ENCODE measurements at regions of chr4 and their contacts with region 1.

Region 1: DNA sequence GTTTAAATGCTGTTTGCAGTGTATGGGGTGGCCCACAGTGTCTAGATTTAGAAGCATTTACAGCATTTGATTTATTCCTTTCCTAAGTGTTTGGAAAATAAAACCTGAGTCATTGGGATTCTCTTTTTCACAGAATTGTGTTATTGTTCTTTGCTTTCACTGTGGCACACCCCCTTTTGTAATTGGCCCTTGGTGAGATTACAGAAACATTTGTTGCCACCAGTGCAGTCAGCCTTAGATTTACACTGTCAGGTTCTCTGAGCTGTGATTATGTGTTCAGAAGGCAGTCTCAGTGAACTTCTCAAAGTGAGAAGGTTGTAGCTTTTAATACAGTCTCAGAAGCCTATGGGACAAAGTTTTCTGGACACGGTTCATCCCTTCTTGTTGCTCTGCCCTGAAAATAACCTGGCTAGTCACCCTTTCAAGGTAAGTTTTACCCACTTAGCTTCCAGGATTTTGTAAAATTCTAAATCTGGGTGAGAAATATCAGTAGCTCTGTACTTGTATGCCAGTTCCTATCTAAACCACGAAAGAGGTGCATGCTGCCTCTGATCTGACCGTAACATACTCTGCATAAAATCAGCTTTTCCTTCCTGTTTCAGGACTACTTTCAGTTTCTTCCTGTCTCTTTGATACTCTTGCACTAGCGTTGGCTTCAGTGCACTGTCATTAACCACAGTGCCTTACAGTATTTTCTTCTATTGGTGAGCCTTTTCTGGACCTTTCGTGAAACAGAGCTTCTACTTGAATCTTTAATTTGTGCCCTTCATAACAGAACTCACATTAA is 12.6 kb downstream of the RUFY3 start:
- DNase-seq: peak in 4 of 5 donors; percentile 10 to 68 (median 62)
- H3K4me3 ChIP-seq: peak overlapping the region; percentile 66
- H3K4me3 Mint-ChIP-seq: peak overlapping the region; percentile 60 to 83 (median 75)
- H3K27ac ChIP-seq: peak overlapping the region; percentile 60
- H3K27ac Mint-ChIP-seq: peak overlapping the region; percentile 77 to 95 (median 88)
- H3K4me1 ChIP-seq: peaks cover 50% of the 10 kb centered on the region
- H3K4me1 Mint-ChIP-seq: peaks cover 42 to 53% (median 48%) of the 10 kb centered on the region in 3 donors
- H3K27me3 ChIP-seq: no peaks in the 10 kb centered on the region
- H3K27me3 Mint-ChIP-seq: no peaks in the 10 kb centered on the region

Region 2: DNA sequence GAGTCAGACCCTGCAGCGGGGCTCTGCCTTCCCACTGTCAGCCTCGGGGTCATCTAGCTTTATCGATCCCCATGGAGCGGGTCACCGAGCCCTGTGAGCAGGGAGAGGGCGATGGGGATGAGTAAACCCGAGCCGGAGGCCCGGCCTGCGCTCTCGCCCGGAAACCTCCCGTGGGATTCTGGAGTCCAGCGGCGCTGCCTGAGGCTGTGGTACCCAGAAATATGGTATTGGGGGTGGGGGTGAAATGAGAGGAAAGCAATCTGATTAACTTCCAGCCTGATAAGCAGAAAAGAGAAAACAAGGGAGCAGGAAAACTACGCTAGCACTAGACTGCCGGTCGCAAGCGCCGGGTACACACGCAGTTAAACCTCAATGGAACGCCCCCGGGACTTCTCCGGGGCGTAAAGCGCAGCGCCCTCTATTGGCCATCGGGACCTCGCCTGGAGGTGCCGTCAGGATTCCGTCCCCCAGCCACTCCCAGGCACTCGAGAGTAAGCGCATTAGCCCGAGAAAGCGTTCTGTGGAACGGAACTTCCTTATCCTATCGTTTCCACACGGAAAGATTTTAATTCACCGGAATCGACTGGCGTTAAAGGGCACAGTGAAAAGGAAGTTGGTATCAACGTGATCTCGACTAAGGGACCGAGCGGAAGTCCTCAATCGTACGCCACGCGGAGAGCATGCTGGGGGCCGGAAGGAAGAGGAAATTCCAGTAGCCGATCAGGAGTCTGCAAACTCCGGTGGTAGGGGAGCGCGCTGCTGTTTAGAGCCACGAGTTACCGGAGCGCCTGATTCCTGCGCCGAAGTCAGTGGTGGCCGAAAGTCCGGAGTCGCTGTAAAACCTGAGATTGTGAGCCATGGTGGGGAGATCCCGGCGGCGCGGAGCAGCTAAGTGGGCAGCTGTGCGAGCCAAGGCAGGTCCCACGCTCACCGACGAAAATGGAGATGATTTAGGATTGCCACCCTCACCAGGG is 46.3 kb before region 1 on chr4 and contains the start of gene UTP3:
- CTCF ChIA-PET with region 1: interaction called, 27 read pairs
- POLR2A ChIA-PET with region 1: interaction called, 9 read pairs
- DNase-seq: peak; percentile 86 to 94 (median 92)
- H3K4me3 ChIP-seq: peak within 1 kb of the TSS; percentile 92
- H3K4me3 Mint-ChIP-seq: peak within 1 kb of the TSS; percentile 91 to 100 (median 96)
- H3K27ac ChIP-seq: peak within 1 kb of the TSS; percentile 86
- H3K27ac Mint-ChIP-seq: peak within 1 kb of the TSS; percentile 89 to 100 (median 98)
- H3K4me1 ChIP-seq: peaks cover 17% of the 10 kb centered on the region
- H3K4me1 Mint-ChIP-seq: peaks cover 37 to 57% (median 43%) of the 10 kb centered on the region in 3 donors
- H3K27me3 ChIP-seq: no peaks in the 10 kb centered on the region
- H3K27me3 Mint-ChIP-seq: no peaks in the 10 kb centered on the region
- total RNA-seq, gene UTP3: 42.5 to 43.4 TPM

Region 3: DNA sequence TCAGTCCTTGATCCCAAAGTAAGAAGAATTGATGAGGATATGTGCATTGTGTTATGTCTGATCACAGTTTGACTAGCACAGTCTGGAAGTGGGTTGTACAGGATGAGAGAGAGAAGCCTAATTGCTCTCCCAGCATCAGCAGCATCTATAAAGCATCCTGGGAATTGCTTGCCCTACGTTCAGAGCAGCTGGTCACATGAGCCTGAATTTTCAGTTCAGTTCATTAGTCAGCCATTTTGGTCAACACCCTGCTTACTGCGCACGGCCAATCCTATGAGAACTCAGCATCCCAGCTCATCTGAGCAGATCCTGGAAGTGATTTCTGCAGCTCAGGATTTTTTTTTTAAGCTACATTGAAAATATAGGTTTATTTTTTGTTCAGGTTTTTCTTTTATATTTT is 12.6 kb before region 1 on chr4 and contains the start of gene RUFY3:
- CTCF ChIA-PET with region 1: interaction called, 51 read pairs
- POLR2A ChIA-PET with region 1: interaction called, 4 read pairs
- DNase-seq: no peak
- H3K4me3 ChIP-seq: no peak within 1 kb of the TSS
- H3K4me3 Mint-ChIP-seq: peak within 1 kb of the TSS in 5 of 7 donors; percentile 2 to 68 (median 61)
- H3K27ac ChIP-seq: no peak within 1 kb of the TSS
- H3K27ac Mint-ChIP-seq: peak within 1 kb of the TSS in 7 of 8 donors; percentile 17 to 86 (median 73)
- H3K4me1 ChIP-seq: peaks cover 17% of the 10 kb centered on the region
- H3K4me1 Mint-ChIP-seq: peaks cover 14 to 35% (median 24%) of the 10 kb centered on the region in 3 donors
- H3K27me3 ChIP-seq: no peaks in the 10 kb centered on the region
- H3K27me3 Mint-ChIP-seq: no peaks in the 10 kb centered on the region
- total RNA-seq, gene RUFY3: 13.8 to 14.8 TPM

Region 4: DNA sequence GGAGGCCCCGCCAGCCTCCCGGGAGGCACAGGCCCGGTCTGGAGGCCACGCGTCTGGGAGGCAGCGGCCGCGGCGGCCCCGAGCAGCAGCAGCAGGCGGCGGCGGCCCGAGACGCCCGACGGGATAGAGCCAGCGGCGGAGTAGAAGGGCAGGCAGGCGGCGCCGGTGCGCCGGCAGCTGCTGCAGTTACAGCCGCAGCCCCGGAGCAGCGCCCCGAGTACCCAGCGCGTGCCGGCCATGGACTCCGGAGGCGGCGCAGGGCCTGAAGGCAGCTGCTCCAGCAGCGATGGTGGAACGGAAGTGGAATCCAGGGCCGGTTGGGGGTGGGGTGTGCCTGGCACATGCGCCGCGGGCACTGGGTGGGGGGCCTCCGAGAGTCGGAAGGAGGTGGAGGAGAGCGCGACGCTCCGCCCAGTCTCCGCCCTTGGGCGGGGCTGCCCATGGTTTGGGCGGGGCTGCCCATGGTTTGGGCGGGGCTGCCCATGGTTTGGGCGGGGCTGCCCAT is 105.3 kb after region 1 on chr4 and contains the start of gene GRSF1:
- CTCF ChIA-PET with region 1: interaction called, 11 read pairs
- POLR2A ChIA-PET with region 1: interaction called, 14 read pairs
- DNase-seq: peak; percentile 93 to 97 (median 94)
- H3K4me3 ChIP-seq: peak within 1 kb of the TSS; percentile 78
- H3K4me3 Mint-ChIP-seq: peak within 1 kb of the TSS; percentile 91 to 99 (median 96)
- H3K27ac ChIP-seq: peak within 1 kb of the TSS; percentile 81
- H3K27ac Mint-ChIP-seq: peak within 1 kb of the TSS; percentile 90 to 100 (median 97)
- H3K4me1 ChIP-seq: peaks cover 29% of the 10 kb centered on the region
- H3K4me1 Mint-ChIP-seq: peaks cover 26 to 35% (median 29%) of the 10 kb centered on the region in 3 donors
- H3K27me3 ChIP-seq: no peaks in the 10 kb centered on the region
- H3K27me3 Mint-ChIP-seq: no peaks in the 10 kb centered on the region
- total RNA-seq, gene GRSF1: 112 to 125 TPM